K562 (cell line): ENCODE measurements at regions of chr3 and their contacts with region 1.

Region 1: GRCh38 chr3:185983495-185984141 is 45.8 kb upstream of the TRA2B start:
- DNase-seq: peak; percentile 78 to 87 (median 83)
- ATAC-seq: peak; percentile 96
- H3K4me3 ChIP-seq: no peak overlapping the region
- H3K27ac ChIP-seq: no peak overlapping the region
- H3K4me1 ChIP-seq: peaks cover 4% of the 10 kb centered on the region in 2 experiments; a peak in 3 of 5 replicates
- H3K27me3 ChIP-seq: peaks cover 0 to 6% of the 10 kb centered on the region in 2 experiments; a peak in 2 of 5 replicates
- CTCF ChIP-seq: peak; percentile 85 to 92 (median 86)
- EP300 ChIP-seq: no peak
- POLR2A ChIP-seq: no peak
- RAD21 ChIP-seq: peak; percentile 93

Region 2: GRCh38 chr3:185677146-185677829 is 306.3 kb before region 1 on chr3:
- CTCF ChIA-PET with region 1: no interaction called
- POLR2A ChIA-PET with region 1: no interaction called
- in situ Hi-C with region 1: no loop called
- intact Hi-C with region 1: no loop called
- DNase-seq: peak; percentile 57 to 68 (median 62)
- ATAC-seq: peak; percentile 92
- H3K4me3 ChIP-seq: no peak overlapping the region
- H3K27ac ChIP-seq: no peak overlapping the region
- H3K4me1 ChIP-seq: no peaks in the 10 kb centered on the region
- H3K27me3 ChIP-seq: no peaks in the 10 kb centered on the region
- CTCF ChIP-seq: peak; percentile 53 to 58 (median 55)
- EP300 ChIP-seq: no peak
- POLR2A ChIP-seq: no peak
- RAD21 ChIP-seq: peak; percentile 35 to 76; a peak in 3 of 4 replicates

Region 3: GRCh38 chr3:186234152-186234551 is 250.5 kb after region 1 on chr3:
- CTCF ChIA-PET with region 1: no interaction called
- POLR2A ChIA-PET with region 1: no interaction called
- in situ Hi-C with region 1: loop called (anchors 5 kb)
- intact Hi-C with region 1: no loop called
- DNase-seq: no peak
- ATAC-seq: no peak
- H3K4me3 ChIP-seq: no peak overlapping the region
- H3K27ac ChIP-seq: no peak overlapping the region
- H3K4me1 ChIP-seq: no peaks in the 10 kb centered on the region
- H3K27me3 ChIP-seq: peaks cover 16 to 46% of the 10 kb centered on the region in 2 experiments; a peak in 4 of 5 replicates
- CTCF ChIP-seq: no peak
- EP300 ChIP-seq: no peak
- POLR2A ChIP-seq: no peak
- RAD21 ChIP-seq: no peak

Region 4: GRCh38 chr3:186540221-186540834 is 556.7 kb after region 1 on chr3:
- CTCF ChIA-PET with region 1: interaction called, 11 read pairs
- POLR2A ChIA-PET with region 1: no interaction called
- in situ Hi-C with region 1: loop called (anchors 5 kb)
- intact Hi-C with region 1: loop called (anchors 2 kb)
- DNase-seq: peak; percentile 58 to 82 (median 63)
- ATAC-seq: peak; percentile 94
- H3K4me3 ChIP-seq: no peak overlapping the region
- H3K27ac ChIP-seq: no peak overlapping the region
- H3K4me1 ChIP-seq: peaks cover 0 to 7% of the 10 kb centered on the region in 2 experiments; a peak in 1 of 5 replicates
- H3K27me3 ChIP-seq: no peaks in the 10 kb centered on the region
- CTCF ChIP-seq: peak; percentile 63 to 90 (median 78)
- EP300 ChIP-seq: no peak
- POLR2A ChIP-seq: no peak
- RAD21 ChIP-seq: peak; percentile 80 to 82

Region 5: GRCh38 chr3:186754006-186754405 is 770.4 kb after region 1 on chr3:
- CTCF ChIA-PET with region 1: no interaction called
- POLR2A ChIA-PET with region 1: no interaction called
- in situ Hi-C with region 1: no loop called
- intact Hi-C with region 1: loop called (anchors 5 kb)
- DNase-seq: no peak
- ATAC-seq: no peak
- H3K4me3 ChIP-seq: no peak overlapping the region
- H3K27ac ChIP-seq: no peak overlapping the region
- H3K4me1 ChIP-seq: peaks cover 0 to 5% of the 10 kb centered on the region in 2 experiments; a peak in 2 of 5 replicates
- H3K27me3 ChIP-seq: no peaks in the 10 kb centered on the region
- CTCF ChIP-seq: no peak
- EP300 ChIP-seq: no peak
- POLR2A ChIP-seq: no peak
- RAD21 ChIP-seq: no peak